H1 (cell line): ENCODE measurements at regions of chr17 and their contacts with region 1.

Region 1: DNA sequence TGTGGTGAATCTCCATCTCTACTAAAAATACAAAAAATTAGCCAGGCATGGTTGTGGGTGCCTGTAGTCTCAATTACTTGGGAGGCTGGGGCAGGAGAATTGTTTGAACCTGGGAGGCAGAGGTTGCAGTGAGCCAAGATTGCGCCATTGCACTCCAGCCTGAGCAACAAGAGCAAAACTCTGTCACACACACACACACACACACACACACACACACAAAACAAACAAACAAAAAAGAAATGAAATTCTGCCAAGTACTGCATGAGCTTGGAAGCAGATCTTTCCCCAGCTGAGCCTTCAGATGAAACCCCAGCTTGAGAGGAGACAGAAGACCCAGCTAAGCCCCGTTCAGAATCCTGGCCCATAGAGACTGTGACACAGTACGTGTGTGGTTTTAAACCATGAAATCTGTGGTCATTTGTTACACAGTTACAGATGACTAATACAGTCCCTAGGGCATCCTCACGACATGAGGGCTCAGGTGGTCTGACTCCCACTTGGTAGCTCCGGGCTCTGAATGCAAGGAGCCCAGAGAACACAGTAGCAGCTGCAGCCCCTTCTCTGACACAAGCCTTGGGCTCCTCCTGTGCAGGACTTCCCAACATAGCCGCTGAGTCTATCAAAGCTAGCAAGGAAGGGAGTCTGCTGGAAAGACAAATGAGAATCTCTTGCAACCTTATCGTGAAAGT is 132.8 kb downstream of the SEC14L1 start:
- DNase-seq: no peak
- H3K4me3 ChIP-seq: no peak overlapping the region
- H3K27ac ChIP-seq: no peak overlapping the region
- H3K4me1 ChIP-seq: no peaks in the 10 kb centered on the region
- H3K27me3 ChIP-seq: no peaks in the 10 kb centered on the region
- CTCF ChIP-seq: no peak
- EP300 ChIP-seq: no peak
- POLR2A ChIP-seq: no peak
- RAD21 ChIP-seq: no peak

Region 2: DNA sequence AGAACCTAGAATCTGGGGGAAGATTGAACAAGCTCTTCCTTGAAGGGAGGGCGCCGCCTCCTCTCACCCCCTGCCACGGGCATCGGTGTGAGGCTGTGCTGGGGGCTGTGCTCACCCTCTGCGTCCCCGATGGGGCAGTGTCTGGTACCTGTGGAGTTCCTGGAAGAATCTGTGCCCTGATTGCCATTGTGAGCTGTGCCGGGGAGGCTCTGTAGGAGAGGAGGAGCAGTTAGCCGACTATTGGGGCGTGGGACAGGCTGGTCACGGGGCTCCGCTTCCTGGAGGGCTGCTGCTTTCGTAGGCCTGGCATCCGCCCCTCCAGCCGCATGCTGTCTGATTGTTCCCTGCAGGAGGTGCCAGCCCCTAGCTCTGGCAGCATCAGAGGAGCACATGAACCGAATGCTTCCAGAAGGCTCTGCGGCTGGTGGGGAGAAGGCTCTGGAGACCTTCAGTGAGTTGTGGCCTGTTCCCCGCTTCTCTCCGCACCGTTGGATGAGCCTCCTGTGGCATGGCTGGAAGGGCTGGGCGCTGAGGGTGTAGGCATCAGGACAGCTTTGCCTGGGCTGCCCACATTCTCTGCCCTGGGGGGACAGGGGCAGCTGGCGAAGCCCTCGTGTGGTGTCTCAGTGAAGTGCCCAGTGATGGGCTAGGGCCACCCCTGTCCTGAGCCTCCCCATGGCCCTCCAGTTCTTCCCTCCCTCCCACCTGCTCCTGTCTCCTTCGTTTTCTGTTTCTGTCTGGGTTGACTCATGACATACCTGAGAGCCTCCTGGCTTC is 45.9 kb before region 1 on chr17:
- CTCF ChIA-PET with region 1: no interaction called
- POLR2A ChIA-PET with region 1: no interaction called
- DNase-seq: no peak
- H3K4me3 ChIP-seq: no peak overlapping the region
- H3K27ac ChIP-seq: no peak overlapping the region
- H3K4me1 ChIP-seq: no peaks in the 10 kb centered on the region
- H3K27me3 ChIP-seq: no peaks in the 10 kb centered on the region
- CTCF ChIP-seq: no peak
- EP300 ChIP-seq: no peak
- POLR2A ChIP-seq: no peak
- RAD21 ChIP-seq: no peak

Region 3: DNA sequence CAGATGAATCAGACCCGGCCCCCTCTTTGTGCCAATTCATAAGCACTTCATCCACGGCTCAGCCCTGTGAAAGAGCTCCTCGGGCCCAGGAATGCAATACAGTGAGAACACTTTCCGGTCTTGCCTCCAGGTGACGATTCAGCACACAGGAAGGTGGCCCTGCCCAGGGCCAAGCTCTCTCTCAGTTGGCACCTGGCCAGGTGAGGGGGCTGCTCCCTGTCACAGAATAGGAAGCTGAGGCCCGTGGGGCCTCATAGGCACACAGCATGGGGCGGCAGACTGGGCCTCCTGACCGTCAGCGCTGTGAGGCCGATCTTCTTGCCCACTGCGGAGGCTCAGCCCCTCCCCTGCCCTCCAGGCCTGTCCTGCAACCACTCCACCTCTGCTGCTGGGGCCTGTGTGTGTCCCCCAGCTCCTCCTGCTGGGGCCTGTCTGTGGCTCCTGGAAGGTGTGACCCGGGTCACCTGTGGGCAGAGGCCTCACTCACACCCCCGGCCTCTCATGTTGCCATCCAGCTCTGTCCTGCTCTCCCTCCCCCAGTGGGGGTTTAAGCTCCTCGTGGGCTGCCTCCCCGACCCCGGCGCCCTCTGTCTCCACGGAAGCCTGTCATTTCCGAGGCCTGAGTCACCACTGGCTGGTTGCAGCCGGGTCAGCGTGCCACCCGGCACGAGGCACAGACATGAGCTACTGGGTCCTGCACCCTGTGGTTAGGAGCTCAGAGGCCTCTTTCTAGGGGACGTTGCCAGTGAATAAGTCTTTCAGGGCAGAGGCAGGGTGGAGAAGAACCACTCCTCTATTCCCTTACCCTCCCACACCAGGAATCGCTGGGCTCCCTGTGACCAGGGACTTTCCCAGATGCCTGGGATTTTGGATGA is 18.4 kb before region 1 on chr17:
- CTCF ChIA-PET with region 1: interaction called, 10 read pairs
- POLR2A ChIA-PET with region 1: interaction called, 3 read pairs
- DNase-seq: no peak
- H3K4me3 ChIP-seq: no peak overlapping the region
- H3K27ac ChIP-seq: no peak overlapping the region
- H3K4me1 ChIP-seq: peaks cover 4 to 10% (median 5%) of the 10 kb centered on the region in 4 experiments; a peak in 6 of 7 replicates
- H3K27me3 ChIP-seq: no peaks in the 10 kb centered on the region
- CTCF ChIP-seq: 0 out of 4 replicates have a peak, but pooled peaks of 1 of the 3 experiments have one; percentile 4
- EP300 ChIP-seq: no peak
- POLR2A ChIP-seq: no peak
- RAD21 ChIP-seq: no peak; a peak in 1 of 4 replicates